ENCODE measurements at regions of chr11 and their contacts with region 1.

Region 1: GRCh38 chr11:65888163-65888814 is at the start of gene FIBP:
- DNase-seq: peak; percentile 98 to 99 (median 99)
- ATAC-seq: peak; percentile 85 to 89 (median 88)
- H3K4me3 ChIP-seq: peak within 1 kb of the TSS; percentile 28 to 98 (median 78)
- H3K27ac ChIP-seq: peak within 1 kb of the TSS; percentile 89 to 100 (median 98)
- H3K4me1 ChIP-seq: peaks cover 13 to 66% (median 47%) of the 10 kb centered on the region in 12 donors
- H3K27me3 ChIP-seq: no peaks in the 10 kb centered on the region
- CTCF ChIP-seq: peak; percentile 79 to 90 (median 84)
- POLR2A ChIP-seq: peak in 1 of 2 donors; percentile 81
- total RNA-seq, gene FIBP: 48.2 to 93.9 (median 57.3) TPM

Region 2: GRCh38 chr11:65817835-65818742 is 70.2 kb before region 1 on chr11:
- intact Hi-C with region 1: loop called in 1 of 10 experiments (anchors 2 kb)
- DNase-seq: peak; percentile 92 to 97 (median 94)
- ATAC-seq: peak; percentile 62 to 98 (median 96)
- H3K4me3 ChIP-seq: peak overlapping the region; percentile 31 to 83 (median 67)
- H3K27ac ChIP-seq: peak overlapping the region in 11 of 12 donors; percentile 33 to 86 (median 62)
- H3K4me1 ChIP-seq: peaks cover 0 to 25% (median 5%) of the 10 kb centered on the region in 12 donors
- H3K27me3 ChIP-seq: no peaks in the 10 kb centered on the region
- CTCF ChIP-seq: peak in 11 of 12 donors; percentile 98 to 100 (median 100)
- POLR2A ChIP-seq: no peak

Region 3: GRCh38 chr11:65873318-65874156 is 14.8 kb before region 1 on chr11:
- intact Hi-C with region 1: loop called in 1 of 10 experiments (anchors 1 kb)
- DNase-seq: peak; percentile 95 to 97 (median 96)
- ATAC-seq: peak; percentile 93 to 97 (median 94)
- H3K4me3 ChIP-seq: peak overlapping the region; percentile 32 to 95 (median 68)
- H3K27ac ChIP-seq: peak overlapping the region; percentile 75 to 99 (median 96)
- H3K4me1 ChIP-seq: peaks cover 3 to 39% (median 22%) of the 10 kb centered on the region in 12 donors
- H3K27me3 ChIP-seq: no peaks in the 10 kb centered on the region
- CTCF ChIP-seq: no peak
- POLR2A ChIP-seq: peak; percentile 52 to 91

Region 4: GRCh38 chr11:65961232-65961901 is 73.1 kb after region 1 on chr11 and contains the start of gene SART1:
- intact Hi-C with region 1: loop called in 5 of 10 experiments (anchors 1 to 5 kb)
- DNase-seq: peak; percentile 99
- ATAC-seq: peak; percentile 98 to 99 (median 98)
- H3K4me3 ChIP-seq: peak within 1 kb of the TSS; percentile 77 to 99 (median 92)
- H3K27ac ChIP-seq: peak within 1 kb of the TSS; percentile 57 to 96 (median 90)
- H3K4me1 ChIP-seq: peaks cover 3 to 28% (median 23%) of the 10 kb centered on the region in 12 donors
- H3K27me3 ChIP-seq: no peaks in the 10 kb centered on the region
- CTCF ChIP-seq: no peak
- POLR2A ChIP-seq: peak in 1 of 2 donors; percentile 81
- total RNA-seq, gene SART1: 21.6 to 57.2 (median 31.1) TPM

Region 5: DNA sequence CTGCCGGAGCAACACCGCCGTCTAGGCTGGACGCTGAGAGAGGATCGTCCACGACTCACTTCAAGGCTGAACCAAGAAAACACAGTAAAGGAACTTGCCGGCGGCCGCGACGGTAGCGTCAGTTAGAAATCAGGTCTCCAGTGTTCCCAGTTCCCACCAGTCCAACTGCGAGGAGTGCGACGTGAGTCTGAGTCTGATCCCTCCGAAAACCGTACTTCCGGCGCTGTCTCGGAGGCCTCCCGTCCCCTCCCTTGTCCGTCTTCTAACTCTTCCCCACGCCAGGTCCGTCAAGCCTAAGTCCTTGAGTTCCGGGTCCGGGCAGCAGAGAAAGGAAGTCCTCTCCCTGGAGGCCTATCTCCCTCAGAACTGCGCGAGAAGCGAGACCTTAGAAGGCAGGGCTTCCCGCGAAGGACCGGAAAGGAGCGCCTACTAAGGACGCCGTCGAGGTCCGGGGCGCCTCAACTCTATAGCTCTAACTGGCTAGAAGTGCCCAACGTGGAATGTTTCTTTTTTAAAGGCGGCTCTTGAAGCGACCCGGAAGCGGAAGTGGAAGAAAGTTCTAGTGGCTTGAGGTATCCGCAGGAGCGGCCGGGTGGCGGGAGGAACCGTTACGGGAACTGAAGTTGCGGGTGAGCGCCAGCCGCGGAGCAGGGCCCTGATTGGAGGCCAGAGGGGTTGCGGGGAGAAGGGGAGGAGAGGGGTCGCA is 113.8 kb after region 1 on chr11 and contains the starts of genes BANF1 and EIF1AD:
- intact Hi-C with region 1: loop called in 2 of 10 experiments (anchors 5 kb)
- DNase-seq: peak; percentile 93
- ATAC-seq: peak; percentile 87 to 95 (median 90)
- H3K4me3 ChIP-seq: peak within 1 kb of the TSS; percentile 68 to 98 (median 82)
- H3K27ac ChIP-seq: peak within 1 kb of the TSS; percentile 73 to 99 (median 94)
- H3K4me1 ChIP-seq: peaks cover 3 to 28% (median 24%) of the 10 kb centered on the region in 12 donors
- H3K27me3 ChIP-seq: no peaks in the 10 kb centered on the region
- CTCF ChIP-seq: peak in 1 of 12 donors; percentile 13
- POLR2A ChIP-seq: peak in 1 of 2 donors; percentile 50
- total RNA-seq, gene BANF1: 68.7 to 227 (median 187) TPM
- total RNA-seq, gene EIF1AD: 13.0 to 25.2 (median 20.7) TPM

Region 6: DNA sequence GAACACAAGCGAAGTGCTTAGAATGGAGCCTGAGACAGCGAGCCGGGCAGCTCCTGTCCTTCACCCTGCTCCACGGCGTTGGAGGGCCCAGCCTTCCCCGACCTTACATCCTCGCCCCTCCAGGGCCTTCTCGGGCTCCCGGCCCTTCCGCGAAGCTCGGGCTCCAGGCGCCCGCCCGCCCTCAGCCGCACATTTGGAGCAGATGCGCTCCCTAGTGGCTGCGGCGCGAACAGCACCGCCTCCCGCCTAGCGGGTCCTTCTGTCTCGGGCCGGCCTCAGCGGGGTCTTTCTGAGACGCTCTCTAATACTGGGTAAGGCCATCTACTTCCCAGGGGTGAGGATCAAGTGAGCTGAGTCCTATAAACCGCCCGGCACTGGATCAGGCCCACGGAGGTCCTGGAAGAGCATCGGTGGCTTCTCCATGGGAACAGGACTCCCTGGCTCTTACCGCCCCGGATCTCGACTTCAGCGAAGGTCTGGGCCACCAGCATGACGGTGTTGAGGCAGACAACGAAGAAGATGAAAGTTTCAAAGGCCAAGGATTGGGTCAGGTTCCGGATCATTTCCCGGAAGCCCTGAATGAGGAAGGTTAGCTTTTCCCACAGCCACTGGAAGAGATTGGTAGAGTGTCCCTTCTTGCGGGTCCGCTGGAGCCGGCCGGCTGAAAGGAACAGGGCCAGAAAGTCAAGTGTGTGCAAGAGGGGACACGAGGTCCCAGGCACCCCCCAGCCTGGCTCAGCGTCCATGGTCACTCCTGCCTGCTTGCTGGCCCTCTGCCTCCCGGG is 134.3 kb after region 1 on chr11:
- intact Hi-C with region 1: no loop called
- DNase-seq: peak; percentile 59 to 90 (median 69)
- ATAC-seq: peak; percentile 56 to 85 (median 72)
- H3K4me3 ChIP-seq: peak overlapping the region in 6 of 12 donors; percentile 3 to 30 (median 16)
- H3K27ac ChIP-seq: no peak overlapping the region
- H3K4me1 ChIP-seq: peaks cover 0 to 24% (median 5%) of the 10 kb centered on the region in 12 donors
- H3K27me3 ChIP-seq: peaks cover 0 to 3% (median 0%) of the 10 kb centered on the region in 9 donors
- CTCF ChIP-seq: peak; percentile 84 to 99 (median 94)
- POLR2A ChIP-seq: no peak

Measured in heart left ventricle (tissue), 16 donors.